Cardiac septum (tissue), 1 donor: ENCODE measurements at regions of chr5 and their contacts with region 1.

Region 1: DNA sequence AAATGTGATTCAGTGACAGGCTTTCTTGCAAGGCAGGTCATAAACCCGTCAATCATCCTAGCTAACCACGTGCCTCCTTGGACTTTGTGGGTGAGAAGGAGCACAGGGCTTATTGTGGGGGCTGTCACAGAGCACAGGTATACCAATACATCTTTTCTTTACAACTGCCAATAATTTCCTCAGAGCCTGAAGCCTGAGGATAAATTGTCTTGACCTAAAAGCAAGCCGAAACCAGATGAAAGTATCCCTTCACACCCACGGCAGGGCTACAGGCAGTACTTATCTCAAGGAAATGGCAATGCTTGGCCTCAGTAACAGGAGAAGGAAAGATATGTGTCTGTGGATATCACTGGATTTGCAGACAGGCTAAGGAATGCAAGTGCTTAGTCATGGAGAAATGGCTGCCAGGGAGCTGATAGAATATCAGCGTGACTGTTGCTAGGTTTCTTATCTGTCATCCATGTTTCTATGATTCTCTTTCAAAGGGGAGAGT is 90.3 kb upstream of the ZNF366 start:
- DNase-seq: no peak

Region 2: DNA sequence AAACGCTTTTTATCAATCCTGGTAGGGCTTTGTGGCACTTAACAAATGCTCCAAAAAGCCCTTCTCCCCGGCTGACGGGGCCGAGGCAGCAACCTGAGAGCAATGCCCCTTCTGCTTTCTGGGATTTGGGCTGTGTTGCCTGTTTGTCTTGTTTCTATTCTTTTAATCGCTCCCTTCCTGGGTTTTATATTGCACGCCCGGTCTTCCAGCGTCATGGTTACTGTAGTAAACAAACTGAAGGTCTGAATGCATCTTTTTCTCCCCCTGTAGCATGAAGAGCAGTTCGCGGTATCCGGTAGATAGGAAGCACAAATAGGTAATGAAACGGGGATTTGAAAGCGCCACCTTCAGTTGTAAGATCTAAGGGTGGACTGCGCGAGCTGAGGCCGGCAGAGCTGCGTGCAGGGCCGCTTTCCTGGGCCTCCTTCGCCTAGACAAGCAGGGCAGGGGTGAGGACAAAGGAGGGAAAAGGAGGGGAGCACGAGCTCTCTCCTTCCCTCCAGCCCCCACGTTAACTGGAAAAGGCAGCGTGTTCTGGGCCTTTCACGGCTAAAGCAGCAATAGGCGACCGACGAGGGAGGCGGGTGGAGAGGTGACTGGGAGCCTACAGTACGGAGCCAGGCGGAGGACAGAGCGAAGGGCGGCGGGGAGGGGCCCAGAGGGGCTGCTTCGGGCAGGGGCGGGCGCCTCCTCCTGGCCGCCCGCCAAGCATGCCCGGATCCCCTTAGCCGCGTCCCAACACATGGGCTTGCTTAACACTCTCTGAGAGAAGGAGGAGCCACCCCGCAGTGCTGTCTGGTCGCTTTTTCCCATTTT is 40.9 kb before region 1 on chr5:
- intact Hi-C with region 1: loop called (anchors 5 kb)
- DNase-seq: peak; percentile 80